A673 (cell line): ENCODE measurements at regions of chr6 and their contacts with region 1.

Region 1: DNA sequence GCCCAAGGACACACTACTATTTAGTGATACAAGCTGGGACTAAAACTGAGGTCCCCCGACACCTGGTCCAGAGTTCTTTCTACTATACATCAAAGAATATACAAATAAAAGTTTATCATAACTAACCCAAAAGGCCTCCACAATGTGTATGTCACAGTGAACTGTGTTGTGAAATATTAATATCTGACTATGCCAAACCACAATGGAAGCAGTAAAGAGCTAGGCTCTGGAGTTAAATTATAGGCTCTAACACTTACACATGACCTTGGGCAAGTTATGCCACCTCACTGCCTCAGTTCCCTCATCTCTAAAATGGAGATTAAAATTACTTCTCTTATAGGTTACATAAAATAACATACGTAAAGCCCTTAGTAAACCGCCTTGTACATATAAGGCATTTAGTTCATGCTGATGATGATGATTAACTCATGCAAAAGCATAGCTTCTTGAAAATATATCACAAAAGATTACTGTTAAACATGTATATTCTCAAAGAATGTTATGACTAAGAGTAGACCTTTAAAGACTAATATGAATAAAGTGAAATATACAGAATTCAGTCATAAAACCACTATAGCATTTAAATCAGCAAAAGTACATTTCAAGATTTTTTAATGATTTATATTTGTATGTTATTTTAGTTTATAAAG is 5.7 kb downstream of the SUPT3H start:
- DNase-seq: no peak
- H3K4me3 ChIP-seq: no peak overlapping the region
- H3K27ac ChIP-seq: no peak overlapping the region
- H3K4me1 ChIP-seq: peaks cover 4% of the 10 kb centered on the region
- H3K27me3 ChIP-seq: no peaks in the 10 kb centered on the region
- CTCF ChIP-seq: no peak

Region 2: GRCh38 chr6:45388328-45388727 is 16.3 kb after region 1 on chr6:
- CTCF ChIA-PET with region 1: interaction called, 14 read pairs
- POLR2A ChIA-PET with region 1: no interaction called
- intact Hi-C with region 1: no loop called
- DNase-seq: no peak
- H3K4me3 ChIP-seq: no peak overlapping the region
- H3K27ac ChIP-seq: no peak overlapping the region
- H3K4me1 ChIP-seq: no peaks in the 10 kb centered on the region
- H3K27me3 ChIP-seq: no peaks in the 10 kb centered on the region
- CTCF ChIP-seq: no peak